PC-9 (cell line): ENCODE measurements at regions of chr2 and their contacts with region 1.

Region 1: DNA sequence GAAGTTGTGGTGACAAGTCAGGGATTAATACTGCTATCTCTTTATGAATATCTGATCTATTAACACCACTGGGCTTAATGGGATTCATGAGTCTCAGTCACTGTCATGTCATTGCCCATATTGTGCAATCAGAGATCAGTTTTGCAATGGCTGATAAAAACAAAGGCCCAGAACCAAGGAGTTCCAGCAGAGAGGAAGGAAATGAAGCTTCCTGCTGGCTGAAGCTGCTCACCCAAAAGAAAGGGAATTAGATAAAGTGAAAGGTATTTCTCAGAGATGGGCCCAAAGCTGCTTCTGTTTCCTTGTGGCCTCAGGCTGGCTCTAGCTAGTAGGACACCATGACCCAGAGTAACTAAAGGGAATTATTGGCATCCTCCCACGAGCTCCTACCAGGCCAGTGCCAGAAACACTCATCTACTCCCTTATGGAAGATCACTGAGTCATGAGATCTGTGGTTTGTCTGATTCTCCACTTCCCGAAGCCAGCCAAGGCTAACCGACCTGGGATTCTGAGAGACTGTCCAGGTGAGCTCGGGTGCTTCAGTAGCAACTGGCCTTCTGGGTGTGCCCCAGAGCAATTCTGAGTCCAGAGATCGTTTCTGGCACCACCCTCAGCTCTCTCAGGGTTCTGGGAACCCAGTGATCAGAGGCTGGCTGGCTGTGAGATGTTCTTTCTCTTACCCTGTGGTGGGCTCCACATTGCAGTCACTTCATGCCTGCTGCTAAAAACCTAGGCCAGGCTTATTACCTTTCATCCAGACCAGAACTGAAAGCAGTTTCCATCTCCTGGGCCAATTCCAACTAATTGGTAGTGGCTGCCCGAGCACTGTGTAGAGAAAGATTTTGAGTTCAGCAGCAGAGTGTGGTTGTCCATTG is 129.5 kb upstream of the PELI1 start:
- DNase-seq: peak; percentile 81 to 98
- H3K4me3 ChIP-seq: peak overlapping the region; percentile 42; the same call in 1 of the 2 replicates
- H3K27ac ChIP-seq: peak overlapping the region; percentile 93
- H3K4me1 ChIP-seq: peaks cover 69% of the 10 kb centered on the region
- H3K27me3 ChIP-seq: no peaks in the 10 kb centered on the region
- CTCF ChIP-seq: no peak

Region 2: DNA sequence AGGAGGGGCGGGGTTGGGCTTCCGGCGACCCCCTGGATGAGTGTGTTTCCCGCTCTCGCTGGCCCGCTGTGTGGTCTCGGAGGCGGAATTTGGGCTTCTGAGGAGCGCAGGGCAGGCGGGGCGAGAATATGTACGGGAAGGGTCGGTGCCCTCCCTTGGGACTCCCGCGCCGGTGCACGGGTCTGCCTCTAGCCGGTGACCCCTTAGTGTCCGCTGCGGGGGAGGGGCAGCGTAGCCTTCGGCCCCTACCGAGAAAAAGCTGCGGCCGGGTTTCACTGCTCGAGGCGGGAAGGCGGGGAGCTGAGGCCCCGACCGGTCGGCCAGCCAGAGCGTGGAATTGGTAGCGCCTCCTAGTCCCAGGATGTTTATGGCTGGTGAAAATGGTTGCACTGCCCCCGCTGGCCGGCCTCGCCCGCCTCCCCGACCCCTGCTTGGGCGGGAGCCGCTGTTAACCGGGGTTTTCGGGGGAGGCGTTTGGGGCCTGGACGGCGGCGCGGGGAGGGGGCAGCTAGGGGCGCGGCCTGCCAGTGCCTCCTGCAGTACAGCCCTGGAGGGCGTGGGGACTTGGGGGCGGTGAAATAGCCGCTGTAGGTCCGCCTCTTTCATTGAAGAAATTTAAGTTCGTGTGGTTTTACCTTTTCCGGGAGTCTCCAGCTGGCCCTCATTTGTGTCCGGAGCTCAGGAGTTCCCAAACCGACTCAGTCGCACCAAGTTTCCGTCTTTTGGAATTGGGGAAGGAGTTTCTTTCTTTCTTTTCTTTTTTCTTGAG is 432.3 kb before region 1 on chr2 and contains the start of gene UGP2:
- CTCF ChIA-PET with region 1: no interaction called
- POLR2A ChIA-PET with region 1: no interaction called
- intact Hi-C with region 1: loop called (anchors 10 kb)
- DNase-seq: peak; percentile 92 to 96
- H3K4me3 ChIP-seq: peak within 1 kb of the TSS; percentile 90
- H3K27ac ChIP-seq: peak within 1 kb of the TSS; percentile 85
- H3K4me1 ChIP-seq: peaks cover 35% of the 10 kb centered on the region
- H3K27me3 ChIP-seq: no peaks in the 10 kb centered on the region
- CTCF ChIP-seq: 0 out of 2 replicates have a peak, but pooled peaks have one; percentile 37
- total RNA-seq, gene UGP2: 83.5 and 89.5 TPM in 2 replicates

Region 3: DNA sequence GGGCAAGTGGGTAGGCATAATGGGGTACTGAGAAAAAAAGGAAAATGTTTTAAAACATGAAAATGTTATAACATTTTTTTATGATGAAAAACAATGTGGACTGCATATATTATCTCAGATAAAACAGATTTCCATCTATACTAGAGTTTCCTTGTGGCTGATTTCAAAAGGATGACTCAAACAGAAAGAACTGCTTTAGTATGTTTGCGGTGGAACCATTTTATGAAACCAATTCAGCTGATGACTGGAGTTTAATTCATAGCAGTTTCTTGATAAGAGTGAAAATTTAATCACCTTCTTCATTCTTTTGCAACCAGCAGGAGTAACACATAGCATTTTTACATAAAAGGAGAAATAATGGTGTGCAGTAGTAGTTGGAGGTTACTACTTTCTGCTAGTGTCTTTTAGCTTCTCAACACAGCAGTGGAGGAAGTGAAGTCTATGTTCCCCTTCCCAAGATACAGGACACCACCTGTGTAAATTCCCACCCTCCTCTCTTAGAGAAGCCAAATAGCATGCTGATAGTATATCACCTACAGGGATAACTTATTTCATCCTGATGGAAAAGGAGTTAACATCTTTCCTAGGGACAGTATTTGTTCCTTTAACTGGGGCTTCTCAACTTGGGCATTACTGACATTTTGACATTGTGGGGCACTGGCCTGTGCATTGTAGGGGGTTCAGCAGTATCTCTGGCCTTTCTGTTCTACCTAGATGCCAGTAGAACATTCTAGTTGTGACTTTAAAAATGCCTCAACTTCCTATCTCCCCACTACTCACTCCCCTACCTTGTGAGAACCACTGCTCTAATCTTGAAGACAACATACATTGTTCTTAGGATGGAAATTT is 159.5 kb before region 1 on chr2:
- CTCF ChIA-PET with region 1: no interaction called
- POLR2A ChIA-PET with region 1: no interaction called
- intact Hi-C with region 1: loop called (anchors 1 kb)
- DNase-seq: peak in 1 of 2 experiments; percentile 83
- H3K4me3 ChIP-seq: no peak overlapping the region
- H3K27ac ChIP-seq: peak overlapping the region; percentile 62
- H3K4me1 ChIP-seq: peaks cover 25% of the 10 kb centered on the region
- H3K27me3 ChIP-seq: no peaks in the 10 kb centered on the region
- CTCF ChIP-seq: no peak

Region 4: GRCh38 chr2:64144057-64145013 is 129.4 kb before region 1 on chr2 and contains the start of gene PELI1:
- CTCF ChIA-PET with region 1: no interaction called
- POLR2A ChIA-PET with region 1: interaction called, 4 read pairs
- intact Hi-C with region 1: loop called (anchors 1 kb)
- DNase-seq: peak; percentile 98 to 99
- H3K4me3 ChIP-seq: peak within 1 kb of the TSS; percentile 80
- H3K27ac ChIP-seq: no peak within 1 kb of the TSS
- H3K4me1 ChIP-seq: peaks cover 36% of the 10 kb centered on the region
- H3K27me3 ChIP-seq: no peaks in the 10 kb centered on the region
- CTCF ChIP-seq: peak; percentile 40; the same call in 1 of the 2 replicates
- total RNA-seq, gene PELI1: 32.6 and 33.1 TPM in 2 replicates

Region 5: DNA sequence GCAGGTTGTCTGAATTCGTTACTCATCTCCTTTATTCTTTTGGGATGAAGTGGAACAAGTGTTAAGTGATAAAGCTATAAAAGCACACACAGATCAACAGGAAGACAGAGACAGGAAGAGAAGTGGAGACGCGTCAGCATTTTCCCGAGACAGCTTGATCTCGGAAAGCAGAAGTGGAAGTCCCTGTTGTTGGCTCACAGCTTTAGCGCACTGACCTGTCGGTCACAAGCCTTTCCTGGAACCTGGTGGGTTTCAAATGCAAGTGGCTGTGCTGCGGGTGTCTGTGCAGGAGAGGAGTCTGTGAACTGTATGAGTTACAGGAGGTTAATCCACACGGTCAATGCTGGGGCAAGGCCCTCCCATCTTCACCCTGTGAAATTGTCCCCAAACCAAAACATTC is 12.9 kb before region 1 on chr2:
- CTCF ChIA-PET with region 1: interaction called, 3 read pairs
- POLR2A ChIA-PET with region 1: interaction called, 5 read pairs
- intact Hi-C with region 1: loop called (anchors 1 kb)
- DNase-seq: peak in 1 of 2 experiments; percentile 25
- H3K4me3 ChIP-seq: no peak overlapping the region
- H3K27ac ChIP-seq: no peak overlapping the region
- H3K4me1 ChIP-seq: peaks cover 24% of the 10 kb centered on the region
- H3K27me3 ChIP-seq: no peaks in the 10 kb centered on the region
- CTCF ChIP-seq: no peak

Region 6: DNA sequence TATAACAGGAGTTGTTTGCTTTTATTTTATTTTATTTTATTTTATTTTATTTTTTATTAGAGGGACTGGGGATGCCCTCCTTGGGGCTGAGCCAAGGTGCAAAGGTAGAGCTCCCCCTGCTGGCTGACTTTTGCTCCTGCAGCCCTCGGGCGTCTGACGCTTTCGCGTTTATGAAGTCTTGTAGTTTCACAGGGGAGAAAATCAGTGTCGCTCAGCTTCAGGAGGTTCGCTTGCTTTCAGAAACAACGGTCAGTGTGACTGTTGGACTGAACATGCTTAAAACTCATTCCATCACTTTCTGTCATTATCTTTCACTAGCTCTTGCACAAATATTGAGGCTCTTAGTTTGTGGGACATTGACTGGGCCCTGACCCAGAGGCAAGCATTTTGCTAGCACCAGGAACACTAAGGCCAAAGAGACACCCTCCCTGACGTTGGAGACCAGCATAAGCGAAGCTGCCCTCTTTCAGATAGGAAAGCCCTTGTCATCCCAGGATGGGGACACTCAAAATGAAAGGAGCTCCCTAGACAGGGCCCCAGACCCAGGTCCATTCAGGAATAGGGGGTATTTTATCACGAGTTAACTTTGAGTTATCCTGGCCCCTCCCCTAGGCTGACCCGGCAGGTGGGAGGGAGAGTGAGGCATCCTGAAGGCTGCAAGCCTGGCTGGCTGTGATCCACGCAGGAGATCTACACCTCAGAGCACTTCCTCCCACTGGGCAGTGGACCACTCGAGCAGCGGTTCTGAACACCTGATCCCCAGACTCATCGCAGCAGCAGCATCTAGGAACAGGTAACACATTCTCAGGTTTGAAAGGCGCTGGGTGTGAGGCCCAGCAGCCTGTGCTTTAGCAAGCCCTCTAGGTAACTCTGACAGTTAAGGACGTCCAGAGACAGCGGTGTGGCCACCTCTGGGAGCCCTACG is 214.6 kb after region 1 on chr2:
- CTCF ChIA-PET with region 1: no interaction called
- POLR2A ChIA-PET with region 1: no interaction called
- intact Hi-C with region 1: loop called (anchors 1 kb)
- DNase-seq: peak in 1 of 2 experiments; percentile 74
- H3K4me3 ChIP-seq: no peak overlapping the region
- H3K27ac ChIP-seq: no peak overlapping the region
- H3K4me1 ChIP-seq: peaks cover 4% of the 10 kb centered on the region; the same call in 1 of the 2 replicates
- H3K27me3 ChIP-seq: no peaks in the 10 kb centered on the region
- CTCF ChIP-seq: peak; percentile 98